ENCODE measurements at regions of chr9 and their contacts with region 1.

Region 1: DNA sequence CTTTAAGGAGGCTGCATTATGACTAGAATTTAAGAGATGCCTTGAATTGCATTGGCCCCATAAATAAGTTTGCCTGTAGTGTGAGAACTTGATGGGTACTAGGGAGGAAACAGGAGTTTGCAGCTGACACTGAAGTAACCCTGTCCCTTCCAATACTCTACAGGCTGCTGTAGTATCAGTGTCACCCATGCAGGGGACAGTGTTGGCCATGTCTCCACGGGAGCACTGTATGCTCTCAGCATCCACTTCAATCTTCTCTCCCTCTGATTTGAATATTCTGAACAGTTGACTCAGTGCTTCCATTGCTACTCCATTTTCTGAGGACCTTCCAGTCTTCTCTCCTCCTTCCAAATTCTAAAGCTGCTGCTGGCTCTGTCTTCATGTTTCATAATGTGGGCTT is 11.4 kb upstream of the IFNA14 start:
- DNase-seq: no peak
- H3K4me3 ChIP-seq: no peak overlapping the region
- H3K27ac ChIP-seq: no peak overlapping the region
- H3K4me1 ChIP-seq: no peaks in the 10 kb centered on the region
- H3K27me3 ChIP-seq: peaks cover 2% of the 10 kb centered on the region; the same call in 1 of the 2 replicates
- CTCF ChIP-seq: no peak
- EP300 ChIP-seq: no peak
- RAD21 ChIP-seq: no peak

Region 2: DNA sequence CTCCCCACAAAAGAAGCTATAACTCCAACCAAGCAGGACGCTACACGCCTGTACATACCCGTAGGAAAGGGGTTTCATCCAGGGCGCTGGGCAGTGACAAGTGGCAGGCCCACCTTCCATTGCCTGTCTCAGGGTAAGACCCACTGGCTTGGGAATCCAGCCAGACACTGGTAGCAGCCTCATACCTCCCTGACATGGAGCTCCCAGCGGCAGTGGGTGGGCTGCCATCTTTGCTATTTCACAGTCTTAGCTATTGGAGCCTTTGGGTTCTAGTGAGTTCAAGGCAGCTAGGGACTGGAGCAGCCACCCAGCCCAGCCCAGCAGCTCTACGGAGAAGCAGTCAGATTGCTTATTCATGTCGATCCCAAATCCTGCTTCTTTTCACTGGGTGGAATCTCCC is 40.9 kb before region 1 on chr9:
- CTCF ChIA-PET with region 1: no interaction called
- POLR2A ChIA-PET with region 1: no interaction called
- DNase-seq: no peak
- H3K4me3 ChIP-seq: no peak overlapping the region
- H3K27ac ChIP-seq: no peak overlapping the region
- H3K4me1 ChIP-seq: no peaks in the 10 kb centered on the region
- H3K27me3 ChIP-seq: no peaks in the 10 kb centered on the region; the same call in 1 of the 2 replicates
- CTCF ChIP-seq: no peak
- EP300 ChIP-seq: no peak
- RAD21 ChIP-seq: no peak

Region 3: GRCh38 chr9:21234153-21234687 is 17.0 kb before region 1 on chr9:
- CTCF ChIA-PET with region 1: interaction called, 14 read pairs
- POLR2A ChIA-PET with region 1: no interaction called
- DNase-seq: no peak
- H3K4me3 ChIP-seq: no peak overlapping the region
- H3K27ac ChIP-seq: no peak overlapping the region
- H3K4me1 ChIP-seq: no peaks in the 10 kb centered on the region
- H3K27me3 ChIP-seq: no peaks in the 10 kb centered on the region
- CTCF ChIP-seq: no peak
- EP300 ChIP-seq: no peak
- RAD21 ChIP-seq: no peak

Region 4: GRCh38 chr9:21281275-21281674 is 30.1 kb after region 1 on chr9:
- CTCF ChIA-PET with region 1: no interaction called
- POLR2A ChIA-PET with region 1: no interaction called
- DNase-seq: no peak
- H3K4me3 ChIP-seq: no peak overlapping the region
- H3K27ac ChIP-seq: no peak overlapping the region
- H3K4me1 ChIP-seq: no peaks in the 10 kb centered on the region
- H3K27me3 ChIP-seq: no peaks in the 10 kb centered on the region
- CTCF ChIP-seq: no peak
- EP300 ChIP-seq: no peak
- RAD21 ChIP-seq: no peak

Region 5: GRCh38 chr9:21856301-21857094 is 605.3 kb after region 1 on chr9:
- CTCF ChIA-PET with region 1: no interaction called
- POLR2A ChIA-PET with region 1: no interaction called
- DNase-seq: no peak
- H3K4me3 ChIP-seq: no peak overlapping the region
- H3K27ac ChIP-seq: no peak overlapping the region
- H3K4me1 ChIP-seq: no peaks in the 10 kb centered on the region
- H3K27me3 ChIP-seq: no peaks in the 10 kb centered on the region
- CTCF ChIP-seq: no peak
- EP300 ChIP-seq: no peak
- RAD21 ChIP-seq: no peak

Measured in SK-N-SH (cell line).